ENCODE measurements at regions of chr6 and their contacts with region 1.

Region 1: DNA sequence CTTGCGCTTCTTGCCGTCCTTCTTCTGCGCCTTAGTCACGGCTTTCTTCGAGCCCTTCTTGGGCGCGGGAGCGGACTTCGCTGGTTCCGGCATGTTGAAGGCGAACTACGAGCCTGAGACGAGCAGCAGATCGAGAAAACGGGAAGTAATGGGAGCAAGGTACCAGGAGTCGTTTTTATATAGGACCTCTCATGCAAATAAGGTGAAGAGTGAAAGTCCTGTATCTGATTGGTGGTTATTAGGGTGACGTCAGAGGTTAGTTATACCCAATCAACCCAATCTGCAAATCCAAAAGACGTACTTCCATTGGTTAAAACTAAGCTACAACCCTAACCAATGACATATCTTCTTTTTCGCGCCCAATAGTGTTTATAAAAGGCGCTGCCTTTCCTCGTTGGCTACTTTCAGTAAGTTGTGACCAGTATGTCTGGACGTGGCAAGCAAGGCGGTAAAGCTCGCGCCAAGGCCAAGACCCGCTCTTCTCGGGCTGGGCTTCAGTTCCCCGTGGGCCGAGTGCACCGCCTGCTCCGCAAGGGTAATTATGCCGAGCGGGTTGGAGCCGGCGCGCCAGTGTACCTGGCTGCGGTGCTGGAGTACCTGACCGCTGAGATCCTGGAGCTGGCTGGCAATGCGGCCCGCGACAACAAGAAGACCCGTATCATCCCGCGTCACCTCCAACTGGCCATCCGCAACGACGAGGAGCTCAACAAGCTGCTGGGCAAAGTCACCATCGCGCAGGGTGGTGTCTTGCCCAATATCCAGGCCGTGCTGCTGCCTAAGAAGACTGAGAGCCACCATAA is 100.6 kb upstream of the PRSS16 start:
- DNase-seq: peak; percentile 99
- H3K4me3 Mint-ChIP-seq: no peak overlapping the region
- H3K27ac Mint-ChIP-seq: no peak overlapping the region
- H3K4me1 Mint-ChIP-seq: no peaks in the 10 kb centered on the region
- H3K27me3 Mint-ChIP-seq: no peaks in the 10 kb centered on the region
- CTCF ChIP-seq: no peak

Region 2: DNA sequence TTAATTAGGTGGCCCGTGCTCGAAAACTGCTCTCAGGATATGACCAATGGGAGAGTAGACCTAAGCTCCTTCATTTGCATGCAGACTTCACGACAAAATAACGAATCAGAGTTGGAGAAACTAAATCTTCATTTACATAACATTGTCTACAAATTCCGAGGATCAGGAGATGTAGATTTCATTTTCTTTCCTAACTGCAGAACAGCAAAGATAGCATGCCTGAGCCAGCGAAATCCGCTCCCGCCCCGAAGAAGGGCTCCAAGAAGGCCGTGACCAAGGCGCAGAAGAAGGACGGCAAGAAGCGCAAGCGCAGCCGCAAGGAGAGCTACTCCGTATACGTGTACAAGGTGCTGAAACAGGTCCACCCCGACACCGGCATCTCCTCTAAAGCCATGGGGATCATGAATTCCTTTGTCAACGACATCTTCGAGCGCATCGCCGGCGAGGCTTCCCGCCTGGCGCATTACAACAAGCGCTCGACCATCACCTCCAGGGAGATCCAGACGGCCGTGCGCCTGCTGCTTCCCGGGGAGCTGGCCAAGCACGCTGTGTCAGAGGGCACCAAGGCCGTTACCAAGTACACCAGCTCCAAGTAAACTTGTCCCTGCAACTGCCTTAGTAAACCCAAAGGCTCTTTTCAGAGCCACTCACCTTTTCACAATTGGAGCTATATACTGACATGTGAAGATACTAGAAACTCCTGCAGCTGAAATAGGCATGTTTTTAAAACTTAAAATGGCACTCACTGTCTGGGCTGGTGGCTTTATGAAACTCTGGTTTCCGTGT is 963.1 kb before region 1 on chr6:
- CTCF ChIA-PET with region 1: no interaction called
- POLR2A ChIA-PET with region 1: interaction called, 14 read pairs
- intact Hi-C with region 1: no loop called
- DNase-seq: peak; percentile 56
- H3K4me3 Mint-ChIP-seq: peak overlapping the region; percentile 79
- H3K27ac Mint-ChIP-seq: peak overlapping the region; percentile 84
- H3K4me1 Mint-ChIP-seq: peaks cover 27% of the 10 kb centered on the region
- H3K27me3 Mint-ChIP-seq: no peaks in the 10 kb centered on the region
- CTCF ChIP-seq: no peak

Region 3: DNA sequence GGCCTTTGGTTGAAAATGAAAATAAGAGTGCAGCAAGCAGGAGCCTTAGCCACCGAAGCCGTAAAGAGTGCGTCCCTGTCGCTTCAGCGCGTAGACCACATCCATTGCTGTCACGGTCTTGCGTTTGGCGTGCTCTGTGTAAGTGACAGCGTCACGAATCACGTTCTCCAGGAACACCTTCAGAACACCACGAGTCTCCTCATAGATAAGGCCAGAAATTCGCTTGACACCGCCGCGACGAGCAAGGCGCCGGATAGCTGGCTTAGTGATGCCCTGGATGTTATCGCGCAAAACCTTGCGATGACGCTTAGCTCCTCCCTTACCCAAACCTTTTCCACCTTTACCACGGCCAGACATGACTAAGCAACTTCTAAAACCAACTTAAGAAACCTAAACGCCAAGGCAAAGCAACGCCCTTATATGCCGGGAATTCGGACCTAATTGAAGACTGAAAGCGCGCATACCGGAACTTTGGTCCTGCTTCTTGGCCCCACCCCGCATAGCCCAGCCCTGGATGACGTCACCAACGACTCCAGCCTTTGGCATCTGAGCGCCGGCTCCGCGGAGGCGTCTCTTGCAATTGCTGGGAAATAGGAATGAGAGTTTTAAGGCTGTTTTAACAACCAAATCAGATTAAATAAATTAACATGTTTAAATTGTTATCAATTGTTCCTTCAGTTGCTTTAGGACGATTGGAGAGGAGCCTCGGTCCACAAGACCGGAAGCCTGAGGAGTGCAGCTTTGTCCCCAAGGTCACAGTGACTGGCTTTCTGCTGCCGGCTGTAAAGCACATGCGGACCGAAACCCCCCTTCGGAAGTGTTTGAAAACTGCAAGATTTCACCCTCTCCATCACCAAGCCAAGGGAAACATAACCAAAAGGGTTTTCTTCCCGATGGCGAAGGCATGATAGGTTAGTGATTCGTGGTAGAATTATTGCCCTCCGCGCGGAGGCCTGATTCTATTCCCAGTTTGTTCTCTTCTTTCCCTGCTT is 861.5 kb before region 1 on chr6:
- CTCF ChIA-PET with region 1: no interaction called
- POLR2A ChIA-PET with region 1: interaction called, 21 read pairs
- intact Hi-C with region 1: no loop called
- DNase-seq: peak; percentile 100
- H3K4me3 Mint-ChIP-seq: peak overlapping the region; percentile 91
- H3K27ac Mint-ChIP-seq: peak overlapping the region; percentile 92
- H3K4me1 Mint-ChIP-seq: peaks cover 10% of the 10 kb centered on the region
- H3K27me3 Mint-ChIP-seq: no peaks in the 10 kb centered on the region
- CTCF ChIP-seq: no peak

Region 4: GRCh38 chr6:27157459-27158315 is 10.8 kb after region 1 on chr6:
- CTCF ChIA-PET with region 1: interaction called, 6 read pairs
- POLR2A ChIA-PET with region 1: interaction called, 63 read pairs
- intact Hi-C with region 1: no loop called
- DNase-seq: peak; percentile 66
- H3K4me3 Mint-ChIP-seq: peak overlapping the region; percentile 80
- H3K27ac Mint-ChIP-seq: peak overlapping the region; percentile 53
- H3K4me1 Mint-ChIP-seq: peaks cover 29% of the 10 kb centered on the region
- H3K27me3 Mint-ChIP-seq: no peaks in the 10 kb centered on the region
- CTCF ChIP-seq: peak; percentile 31

Region 5: GRCh38 chr6:27224729-27225128 is 77.8 kb after region 1 on chr6:
- CTCF ChIA-PET with region 1: no interaction called
- POLR2A ChIA-PET with region 1: no interaction called
- intact Hi-C with region 1: no loop called
- DNase-seq: no peak
- H3K4me3 Mint-ChIP-seq: no peak overlapping the region
- H3K27ac Mint-ChIP-seq: no peak overlapping the region
- H3K4me1 Mint-ChIP-seq: peaks cover 6% of the 10 kb centered on the region
- H3K27me3 Mint-ChIP-seq: no peaks in the 10 kb centered on the region
- CTCF ChIP-seq: no peak

Region 6: GRCh38 chr6:27795697-27796494 is 649.0 kb after region 1 on chr6:
- CTCF ChIA-PET with region 1: no interaction called
- POLR2A ChIA-PET with region 1: interaction called, 18 read pairs
- intact Hi-C with region 1: no loop called
- DNase-seq: peak; percentile 91
- H3K4me3 Mint-ChIP-seq: no peak overlapping the region
- H3K27ac Mint-ChIP-seq: no peak overlapping the region
- H3K4me1 Mint-ChIP-seq: peaks cover 5% of the 10 kb centered on the region
- H3K27me3 Mint-ChIP-seq: no peaks in the 10 kb centered on the region
- CTCF ChIP-seq: peak; percentile 79

Region 7: DNA sequence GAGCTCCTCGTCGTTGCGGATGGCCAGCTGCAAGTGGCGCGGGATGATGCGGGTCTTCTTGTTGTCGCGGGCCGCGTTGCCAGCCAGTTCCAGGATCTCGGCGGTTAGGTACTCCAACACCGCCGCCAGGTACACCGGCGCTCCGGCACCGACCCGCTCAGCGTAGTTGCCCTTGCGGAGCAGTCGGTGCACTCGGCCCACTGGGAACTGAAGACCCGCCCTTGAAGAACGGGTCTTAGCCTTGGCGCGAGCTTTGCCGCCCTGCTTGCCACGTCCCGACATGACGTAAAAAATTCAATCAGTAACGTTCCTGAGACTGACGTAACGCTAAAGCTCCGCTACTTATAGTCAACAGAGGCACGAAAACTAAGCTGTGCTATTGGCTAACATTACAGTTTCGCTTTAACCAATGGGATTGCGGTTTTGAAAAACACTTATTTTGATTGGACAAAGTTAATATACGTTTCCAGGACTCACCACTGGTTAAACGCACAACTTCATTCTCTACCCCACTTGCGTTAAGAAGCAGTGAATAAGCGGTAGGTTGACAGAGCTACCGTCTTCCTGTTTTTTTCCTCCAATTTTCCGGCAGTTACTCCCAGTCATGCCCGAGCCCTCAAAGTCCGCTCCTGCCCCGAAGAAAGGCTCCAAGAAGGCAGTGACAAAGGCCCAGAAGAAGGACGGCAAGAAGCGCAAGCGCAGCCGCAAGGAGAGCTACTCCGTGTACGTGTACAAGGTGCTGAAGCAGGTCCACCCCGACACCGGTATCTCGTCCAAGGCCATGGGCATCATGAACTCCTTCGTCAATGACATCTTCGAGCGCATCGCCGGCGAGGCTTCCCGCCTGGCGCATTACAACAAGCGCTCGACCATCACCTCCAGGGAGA is 691.4 kb after region 1 on chr6:
- CTCF ChIA-PET with region 1: no interaction called
- POLR2A ChIA-PET with region 1: interaction called, 117 read pairs
- intact Hi-C with region 1: no loop called
- DNase-seq: peak; percentile 98
- H3K4me3 Mint-ChIP-seq: no peak overlapping the region
- H3K27ac Mint-ChIP-seq: no peak overlapping the region
- H3K4me1 Mint-ChIP-seq: peaks cover 32% of the 10 kb centered on the region
- H3K27me3 Mint-ChIP-seq: no peaks in the 10 kb centered on the region
- CTCF ChIP-seq: no peak